ENCODE measurements at regions of chr2 and their contacts with region 1.

Region 1: DNA sequence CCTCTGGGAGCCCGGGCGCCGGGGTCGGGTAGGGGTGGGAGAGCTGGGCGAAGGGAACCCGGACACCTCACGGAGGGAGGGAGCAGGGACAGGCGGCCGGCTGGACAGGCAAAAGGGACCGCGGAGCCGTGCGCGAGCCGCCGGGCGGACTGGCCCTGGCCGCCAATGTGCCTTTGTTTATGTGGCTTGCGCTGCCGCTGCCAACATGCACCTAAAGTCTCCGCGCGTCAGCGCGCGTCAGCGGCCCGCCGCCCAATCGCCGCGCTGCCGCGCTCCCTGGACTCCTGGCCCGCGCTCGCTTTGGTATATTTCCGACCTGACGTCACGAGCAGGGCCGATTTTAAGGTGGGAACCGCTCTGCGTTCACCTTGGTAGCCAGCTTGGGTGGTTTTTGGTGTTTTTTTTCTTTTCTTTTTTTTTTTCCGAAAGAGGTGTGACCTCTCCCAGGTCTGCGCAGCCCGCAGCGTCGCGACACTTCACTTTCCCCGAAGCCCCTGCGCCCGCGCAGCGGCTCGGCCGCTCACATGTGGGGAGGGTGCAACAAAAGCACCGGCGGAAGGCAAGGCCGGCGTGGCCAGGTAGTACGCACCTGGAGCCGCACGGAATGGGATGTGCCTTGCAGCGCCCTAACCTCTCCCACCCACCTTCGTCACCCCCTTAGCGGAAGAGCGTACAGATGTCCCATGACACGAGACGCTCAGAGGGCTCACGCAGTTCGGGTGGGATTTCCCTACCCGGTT is at the start of gene NR4A2:
- DNase-seq: peak; percentile 72 to 97
- H3K4me3 ChIP-seq: peak within 1 kb of the TSS; percentile 61 to 84
- H3K27ac ChIP-seq: peak within 1 kb of the TSS; percentile 98 to 99
- H3K4me1 ChIP-seq: peaks cover 0 to 4% of the 10 kb centered on the region in 2 donors
- H3K27me3 ChIP-seq: no peaks in the 10 kb centered on the region
- CTCF ChIP-seq: no peak
- total RNA-seq, gene NR4A2: 8.7 TPM

Region 2: GRCh38 chr2:156319811-156320485 is 12.8 kb before region 1 on chr2:
- intact Hi-C with region 1: loop called (anchors 1 kb)
- DNase-seq: peak in 1 of 2 donors; percentile 84
- H3K4me3 ChIP-seq: peak overlapping the region; percentile 50 to 64
- H3K27ac ChIP-seq: peak overlapping the region; percentile 66 to 83
- H3K4me1 ChIP-seq: peaks cover 3% of the 10 kb centered on the region in 2 donors
- H3K27me3 ChIP-seq: no peaks in the 10 kb centered on the region
- CTCF ChIP-seq: peak in 2 of 3 experiments; percentile 19 to 31

Region 3: GRCh38 chr2:156400706-156401678 is 68.3 kb after region 1 on chr2:
- intact Hi-C with region 1: loop called (anchors 1 kb)
- DNase-seq: peak in 1 of 2 donors; percentile 88
- H3K4me3 ChIP-seq: peak overlapping the region; percentile 56 to 96
- H3K27ac ChIP-seq: peak overlapping the region; percentile 87 to 99
- H3K4me1 ChIP-seq: peaks cover 0 to 4% of the 10 kb centered on the region in 2 donors
- H3K27me3 ChIP-seq: no peaks in the 10 kb centered on the region
- CTCF ChIP-seq: no peak

Region 4: DNA sequence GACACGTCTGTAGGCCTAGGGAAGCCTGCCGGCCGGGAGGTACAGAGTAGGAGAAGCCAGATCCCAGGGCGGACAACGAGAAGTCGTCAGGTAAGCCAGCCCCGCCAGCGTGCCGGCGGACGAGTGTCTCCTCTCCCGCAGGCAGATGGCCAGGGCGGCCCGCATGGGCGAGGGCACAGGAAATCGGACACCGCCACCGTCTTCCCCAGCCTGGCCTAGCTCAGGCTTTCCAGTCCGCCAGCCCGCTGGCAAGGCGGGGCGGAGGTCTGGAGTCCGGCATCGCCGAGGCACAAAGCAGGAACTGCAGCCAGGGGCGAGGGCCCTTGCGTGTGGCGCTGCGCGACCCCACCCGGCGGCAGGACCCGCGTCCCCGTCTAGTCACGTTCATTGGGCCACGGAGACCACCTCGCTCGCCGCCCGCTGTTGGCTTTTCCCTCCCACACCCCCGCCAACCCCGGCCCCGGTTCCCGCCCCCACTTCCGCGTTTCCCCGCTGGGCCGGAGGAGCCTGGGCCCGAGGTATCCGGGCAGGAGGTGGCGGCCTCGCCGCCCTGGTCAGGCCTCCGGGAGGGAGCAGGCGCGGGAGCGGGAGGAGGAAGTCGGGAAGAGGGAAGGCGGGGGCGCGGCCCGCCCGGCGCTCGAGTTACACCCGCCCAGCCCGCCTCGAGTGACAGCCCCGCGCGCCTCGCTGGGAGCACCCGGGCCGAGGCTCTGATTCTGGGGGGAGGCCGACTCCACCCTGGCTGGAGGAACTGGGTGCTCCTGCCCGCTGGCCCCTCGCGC is 103.2 kb after region 1 on chr2 and contains the start of gene GPD2:
- intact Hi-C with region 1: loop called (anchors 2 kb)
- DNase-seq: peak; percentile 43 to 95
- H3K4me3 ChIP-seq: peak within 1 kb of the TSS; percentile 67 to 86
- H3K27ac ChIP-seq: peak within 1 kb of the TSS; percentile 99 to 100
- H3K4me1 ChIP-seq: peaks cover 9 to 21% of the 10 kb centered on the region in 2 donors
- H3K27me3 ChIP-seq: no peaks in the 10 kb centered on the region
- CTCF ChIP-seq: peak in 2 of 3 experiments; percentile 6 to 12
- total RNA-seq, gene GPD2: 20.0 TPM

Region 5: GRCh38 chr2:157182834-157183396 is 850.2 kb after region 1 on chr2:
- intact Hi-C with region 1: loop called (anchors 5 kb)
- DNase-seq: no peak
- H3K4me3 ChIP-seq: no peak overlapping the region
- H3K27ac ChIP-seq: peak overlapping the region in 1 of 2 donors; percentile 68
- H3K4me1 ChIP-seq: no peaks in the 10 kb centered on the region
- H3K27me3 ChIP-seq: no peaks in the 10 kb centered on the region
- CTCF ChIP-seq: no peak

Region 6: DNA sequence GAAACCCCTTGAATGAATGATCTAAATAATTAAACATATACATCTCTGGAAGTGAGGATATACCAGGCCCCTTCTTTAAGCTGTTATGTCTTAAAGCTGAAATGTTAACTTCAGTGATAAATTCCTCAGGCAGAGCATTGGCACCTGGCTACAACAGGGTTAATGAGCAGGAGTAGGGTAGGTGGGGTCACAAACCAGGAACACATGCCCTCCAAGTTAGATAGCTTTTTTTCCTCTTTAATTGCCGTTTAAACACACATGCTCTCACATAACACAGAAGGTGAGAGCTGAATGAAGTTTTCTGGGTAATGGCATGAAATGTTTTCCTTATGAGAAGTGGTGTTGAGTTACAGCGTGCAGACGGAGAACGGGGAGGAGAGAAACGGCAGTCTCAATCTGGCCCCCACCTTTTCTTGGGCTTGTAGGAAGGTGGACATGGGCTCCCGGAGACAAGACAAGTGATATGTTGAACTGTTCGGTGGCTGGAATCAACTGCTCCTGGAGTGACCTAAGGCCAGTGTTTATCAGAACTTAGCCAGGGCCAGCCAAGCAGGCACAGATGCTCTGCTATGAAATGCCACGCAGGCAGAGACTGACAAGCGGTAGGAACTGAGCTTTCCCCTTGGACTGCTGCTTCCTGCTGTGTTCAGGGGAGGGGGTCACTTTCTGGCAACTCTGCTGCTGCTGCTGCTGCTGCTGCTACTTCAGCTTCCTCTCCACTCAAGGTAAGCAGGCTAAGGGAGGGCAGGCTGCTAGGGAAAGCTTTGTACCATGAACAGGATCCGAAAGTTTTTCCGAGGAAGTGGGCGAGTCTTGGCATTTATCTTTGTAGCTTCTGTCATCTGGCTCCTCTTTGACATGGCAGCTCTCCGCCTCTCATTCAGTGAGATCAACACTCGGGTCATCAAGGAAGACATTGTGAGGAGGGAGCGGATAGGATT is 924.9 kb after region 1 on chr2 and contains the start of gene GALNT5:
- intact Hi-C with region 1: loop called (anchors 10 kb)
- DNase-seq: no peak
- H3K4me3 ChIP-seq: peak within 1 kb of the TSS; percentile 27 to 48
- H3K27ac ChIP-seq: peak within 1 kb of the TSS; percentile 14 to 40
- H3K4me1 ChIP-seq: peaks cover 0 to 6% of the 10 kb centered on the region in 2 donors
- H3K27me3 ChIP-seq: no peaks in the 10 kb centered on the region
- CTCF ChIP-seq: no peak
- total RNA-seq, gene GALNT5: 0.11 TPM

Measured in ascending aorta (tissue), 2 donors.